AG04449 (cell line): ENCODE measurements at regions of chr6 and their contacts with region 1.

Region 1: DNA sequence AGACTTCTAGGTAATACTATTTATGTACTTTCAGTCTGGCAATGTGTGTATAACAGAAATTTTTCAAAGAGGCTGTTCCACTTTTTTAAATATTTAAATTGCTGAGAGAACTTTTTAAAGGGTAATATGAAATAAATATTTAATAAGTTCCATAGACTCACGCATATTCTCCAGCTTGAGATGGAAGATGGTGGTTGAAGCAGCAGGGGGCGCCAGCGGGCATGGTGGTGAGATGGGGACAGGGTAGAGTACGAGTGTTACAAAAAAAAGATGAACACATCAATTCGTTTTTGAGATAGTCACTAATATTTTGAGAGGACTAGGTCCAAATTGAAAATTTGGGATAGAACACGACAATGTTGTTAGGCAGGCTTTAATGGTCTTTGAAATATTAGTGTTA is 68.4 kb downstream of the RSPO3 start:
- DNase-seq: no peak
- H3K4me3 ChIP-seq: no peak overlapping the region
- CTCF ChIP-seq: peak; percentile 11

Region 2: GRCh38 chr6:125995972-125996580 is 1190.8 kb before region 1 on chr6:
- CTCF ChIA-PET with region 1: interaction called, 14 read pairs
- POLR2A ChIA-PET with region 1: no interaction called
- DNase-seq: no peak
- H3K4me3 ChIP-seq: no peak overlapping the region
- CTCF ChIP-seq: peak; percentile 87

Region 3: DNA sequence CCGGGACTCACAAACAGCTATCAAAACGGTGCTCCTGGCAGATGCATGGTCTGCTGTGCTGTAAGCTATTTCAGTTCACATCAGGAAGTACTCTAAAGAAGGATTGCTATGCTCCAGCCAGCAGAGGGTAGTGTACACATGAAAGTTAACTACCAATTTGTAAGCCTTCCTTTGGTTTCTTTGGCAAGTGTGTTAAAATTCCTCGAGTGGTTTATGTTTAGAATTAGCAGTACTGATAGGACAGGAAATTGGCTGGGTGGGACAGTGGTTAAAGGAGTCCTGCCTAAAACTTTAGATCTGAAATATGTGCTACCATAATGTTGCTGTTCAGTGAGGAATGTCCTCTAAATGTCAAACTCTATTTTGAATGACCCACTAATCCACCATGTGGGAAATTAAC is 1153.2 kb before region 1 on chr6:
- CTCF ChIA-PET with region 1: interaction called, 12 read pairs
- POLR2A ChIA-PET with region 1: no interaction called
- DNase-seq: peak; percentile 80
- H3K4me3 ChIP-seq: no peak overlapping the region
- CTCF ChIP-seq: peak; percentile 68

Region 4: GRCh38 chr6:126361832-126362412 is 825.0 kb before region 1 on chr6:
- CTCF ChIA-PET with region 1: interaction called, 10 read pairs
- POLR2A ChIA-PET with region 1: no interaction called
- DNase-seq: no peak
- H3K4me3 ChIP-seq: no peak overlapping the region
- CTCF ChIP-seq: no peak

Region 5: DNA sequence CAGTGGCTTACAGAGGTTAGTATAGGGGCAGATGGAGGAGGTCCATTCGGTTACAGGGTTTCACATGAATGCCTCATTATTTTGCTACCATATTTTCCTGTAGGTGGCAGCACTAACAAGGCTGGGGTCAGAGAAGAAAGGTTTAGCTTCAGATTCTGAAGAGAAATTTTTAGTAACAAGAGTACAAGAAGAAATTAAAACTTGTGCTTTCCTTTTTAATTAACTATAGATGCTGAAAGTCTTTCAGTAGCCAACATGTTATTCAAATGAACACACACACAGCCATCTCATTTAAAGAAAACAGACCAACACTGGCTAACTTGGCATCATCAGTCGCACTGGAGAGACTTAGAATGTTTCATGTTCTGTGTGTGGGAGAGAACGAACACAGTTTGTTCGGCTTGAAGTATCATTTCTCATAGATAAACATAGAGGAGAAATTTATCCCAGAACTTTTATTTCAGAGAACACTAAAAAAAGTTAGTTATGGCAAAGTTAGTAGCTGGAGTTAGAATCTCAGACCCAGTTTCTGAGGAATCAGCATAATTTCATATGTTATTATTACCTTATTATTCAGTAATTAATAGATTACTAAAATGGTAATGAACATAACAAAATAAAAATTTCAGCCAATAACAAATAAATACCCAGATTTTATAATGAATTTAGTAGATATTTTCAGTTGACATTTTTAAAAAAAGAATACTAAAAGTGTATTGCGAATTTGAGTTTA is 382.4 kb before region 1 on chr6:
- CTCF ChIA-PET with region 1: interaction called, 34 read pairs
- POLR2A ChIA-PET with region 1: no interaction called
- DNase-seq: no peak
- H3K4me3 ChIP-seq: no peak overlapping the region
- CTCF ChIP-seq: peak; percentile 53

Region 6: DNA sequence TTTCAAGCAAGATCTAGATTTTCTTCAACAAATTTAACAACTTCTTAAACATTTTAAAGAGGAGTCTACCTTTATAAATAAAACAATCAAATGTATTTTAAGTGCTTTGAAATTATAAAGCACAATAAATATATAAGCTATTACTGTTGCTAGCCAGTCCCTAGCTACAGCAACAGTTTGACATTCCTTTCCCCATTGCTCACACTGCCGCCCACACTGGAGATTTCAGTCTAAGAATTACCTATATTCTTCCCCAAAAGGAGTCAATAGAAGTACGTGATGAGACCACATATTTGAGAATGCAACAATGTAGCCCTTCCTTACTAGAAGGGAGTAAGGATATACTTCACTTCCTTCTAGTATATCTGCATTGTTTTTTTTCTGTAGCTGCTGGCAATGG is 14.4 kb after region 1 on chr6:
- CTCF ChIA-PET with region 1: interaction called, 18 read pairs
- POLR2A ChIA-PET with region 1: interaction called, 3 read pairs
- DNase-seq: peak; percentile 44
- H3K4me3 ChIP-seq: no peak overlapping the region
- CTCF ChIP-seq: no peak